Activated naive CD8-positive, alpha-beta T cell treated with anti-CD3 and anti-CD28 coated beads, Interleukin-2, amount 10 ng/mL, durations not matched to agents 7 days and 5 days (primary cell): ENCODE measurements at regions of chr16 and their contacts with region 1.

Region 1: DNA sequence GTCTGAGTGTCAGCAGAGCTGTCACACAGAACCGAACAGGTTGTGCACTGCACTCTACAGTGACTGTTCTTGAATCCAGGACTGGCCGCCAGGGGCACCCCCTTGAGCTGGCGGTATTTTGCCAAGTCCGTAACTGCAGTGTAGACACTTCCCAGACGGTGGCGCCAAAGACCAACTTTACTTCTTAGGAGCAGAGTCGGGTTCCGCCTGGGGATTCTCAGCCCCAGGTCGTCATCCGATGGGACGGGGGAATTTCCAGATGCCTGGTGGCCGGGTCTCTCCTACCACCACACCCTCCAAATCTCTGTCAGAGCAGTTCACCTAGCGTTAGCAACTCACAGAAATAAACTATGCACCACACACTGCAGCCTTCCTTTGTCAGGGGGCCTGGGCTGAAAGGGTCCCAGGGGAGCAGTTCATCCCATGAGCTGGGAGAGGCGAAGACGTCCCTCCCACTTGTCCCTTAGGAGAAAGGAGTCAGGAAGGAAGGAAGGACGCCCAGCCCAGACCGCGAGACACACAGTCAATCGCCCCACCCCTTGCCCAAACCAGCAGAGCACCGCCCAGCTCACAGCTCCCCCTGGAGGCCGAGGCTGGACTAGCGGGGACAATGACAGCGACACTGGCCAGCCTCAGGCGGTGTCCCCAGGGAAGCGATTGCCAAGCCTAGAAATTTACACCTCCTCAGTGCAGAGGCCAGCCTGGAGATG is 7.4 kb upstream of the RIPOR1 start:
- DNase-seq: peak; percentile 96
- ATAC-seq: peak; percentile 84
- H3K4me3 Mint-ChIP-seq: peak overlapping the region; percentile 85
- H3K27ac Mint-ChIP-seq: peak overlapping the region; percentile 91
- H3K4me1 Mint-ChIP-seq: peaks cover 37% of the 10 kb centered on the region
- H3K27me3 Mint-ChIP-seq: no peaks in the 10 kb centered on the region

Region 2: GRCh38 chr16:67406111-67406890 is 114.9 kb before region 1 on chr16:
- POLR2A ChIA-PET with region 1: no interaction called
- DNase-seq: no peak
- ATAC-seq: no peak
- H3K4me3 Mint-ChIP-seq: no peak overlapping the region
- H3K27ac Mint-ChIP-seq: no peak overlapping the region
- H3K4me1 Mint-ChIP-seq: peaks cover 2% of the 10 kb centered on the region
- H3K27me3 Mint-ChIP-seq: peaks cover 11% of the 10 kb centered on the region

Region 3: DNA sequence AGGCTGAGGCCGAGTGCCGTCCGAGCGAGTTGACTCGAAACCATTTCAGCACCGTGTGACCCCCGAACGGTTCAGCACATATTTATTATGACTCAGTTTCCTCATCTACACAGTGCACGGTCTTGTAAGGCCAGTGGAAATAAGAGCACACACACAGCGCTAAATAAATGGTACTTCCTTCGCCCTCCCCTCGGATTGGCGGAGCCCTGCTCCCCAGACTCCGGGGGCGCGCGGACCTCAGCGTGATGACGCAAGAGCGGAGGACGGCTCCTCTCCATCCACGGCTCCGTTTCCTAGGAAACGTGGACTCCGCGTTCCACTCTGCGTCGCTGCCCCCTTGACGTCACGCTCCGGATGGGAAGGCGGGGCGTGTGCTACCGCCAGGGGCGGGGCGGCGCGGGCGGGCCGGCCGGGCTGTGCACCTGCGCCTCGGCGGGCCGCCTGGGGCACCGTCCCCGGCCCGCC is 139.3 kb after region 1 on chr16 and contains the start of gene PARD6A:
- POLR2A ChIA-PET with region 1: interaction called, 10 read pairs
- DNase-seq: peak; percentile 93
- ATAC-seq: peak; percentile 85
- H3K4me3 Mint-ChIP-seq: peak within 1 kb of the TSS; percentile 95
- H3K27ac Mint-ChIP-seq: peak within 1 kb of the TSS; percentile 95
- H3K4me1 Mint-ChIP-seq: peaks cover 14% of the 10 kb centered on the region
- H3K27me3 Mint-ChIP-seq: no peaks in the 10 kb centered on the region
- total RNA-seq, gene PARD6A: 9.5 to 11.1 TPM

Region 4: GRCh38 chr16:67667817-67668494 is 146.7 kb after region 1 on chr16:
- POLR2A ChIA-PET with region 1: interaction called, 15 read pairs
- DNase-seq: peak; percentile 81
- ATAC-seq: peak; percentile 91
- H3K4me3 Mint-ChIP-seq: peak overlapping the region; percentile 93
- H3K27ac Mint-ChIP-seq: no peak overlapping the region
- H3K4me1 Mint-ChIP-seq: peaks cover 9% of the 10 kb centered on the region
- H3K27me3 Mint-ChIP-seq: no peaks in the 10 kb centered on the region